ENCODE measurements at regions of chr17 and their contacts with region 1.

Region 1: DNA sequence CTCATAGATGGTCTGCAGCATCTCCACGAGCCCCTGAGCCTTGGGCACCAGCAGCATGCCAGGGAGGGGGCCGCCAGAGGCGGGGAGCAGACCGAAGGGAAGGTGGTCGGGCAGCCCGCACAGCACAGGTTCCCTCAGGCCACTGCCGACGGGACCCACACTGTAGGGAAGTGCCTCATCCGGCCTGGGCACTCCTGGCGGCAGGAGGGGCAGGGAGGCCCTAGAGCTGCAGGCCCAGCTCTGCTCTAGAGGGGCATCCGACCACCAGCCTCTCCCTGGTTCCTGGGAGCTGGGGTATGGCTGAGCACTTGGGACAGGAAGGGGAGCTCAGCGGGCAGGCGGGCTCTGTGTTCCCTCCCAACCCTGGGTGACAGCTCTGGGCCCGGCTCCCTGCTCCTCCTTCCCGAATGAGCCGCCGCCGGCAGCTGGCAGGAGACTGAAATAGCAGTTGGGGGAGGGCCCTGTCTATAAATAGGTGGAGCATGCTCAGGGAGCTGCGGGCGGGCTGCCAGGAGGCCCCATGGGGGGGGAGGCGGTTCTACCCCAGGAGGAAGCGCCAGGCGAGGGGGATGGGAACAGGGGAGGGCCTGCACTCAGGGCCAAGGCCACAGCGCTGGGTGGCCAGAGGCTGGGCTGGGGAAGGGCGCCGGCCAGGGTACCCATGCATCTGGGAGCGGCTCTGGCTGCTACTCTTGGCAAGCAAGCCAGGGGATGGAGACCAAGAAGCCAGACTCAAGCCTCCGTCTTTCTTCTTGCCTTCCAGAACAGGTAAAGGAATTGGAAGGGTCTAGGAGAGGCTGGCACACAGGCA is 12.4 kb downstream of the HDAC5 start:
- DNase-seq: peak; percentile 98 to 99
- ATAC-seq: peak; percentile 43 to 62
- H3K4me3 ChIP-seq: peak overlapping the region; percentile 29 to 76 (median 67)
- H3K27ac ChIP-seq: peak overlapping the region; percentile 92 to 94 (median 94)
- H3K4me1 ChIP-seq: peaks cover 94 to 97% of the 10 kb centered on the region in 2 donors
- H3K27me3 ChIP-seq: no peaks in the 10 kb centered on the region
- CTCF ChIP-seq: peak in 2 of 5 experiments; percentile 23 to 36
- POLR2A ChIP-seq: peak; percentile 98 to 99

Region 2: GRCh38 chr17:44006598-44007345 is 104.3 kb before region 1 on chr17:
- in situ Hi-C with region 1: no loop called
- intact Hi-C with region 1: loop called (anchors 5 kb)
- DNase-seq: peak; percentile 92 to 95
- ATAC-seq: peak; percentile 83 to 91
- H3K4me3 ChIP-seq: peak overlapping the region; percentile 52 to 71 (median 67)
- H3K27ac ChIP-seq: peak overlapping the region in 2 of 4 donors; percentile 32 to 66
- H3K4me1 ChIP-seq: peaks cover 15 to 28% of the 10 kb centered on the region in 2 donors
- H3K27me3 ChIP-seq: peaks cover 35 to 40% (median 40%) of the 10 kb centered on the region in 3 donors
- CTCF ChIP-seq: peak; percentile 18 to 73 (median 59)
- POLR2A ChIP-seq: peak; percentile 21 to 39

Region 3: GRCh38 chr17:44095642-44096496 is 15.2 kb before region 1 on chr17:
- in situ Hi-C with region 1: no loop called
- intact Hi-C with region 1: loop called (anchors 2 kb)
- DNase-seq: peak; percentile 53 to 64
- ATAC-seq: peak; percentile 36 to 63
- H3K4me3 ChIP-seq: peak overlapping the region; percentile 3 to 44 (median 36)
- H3K27ac ChIP-seq: peak overlapping the region; percentile 83 to 94 (median 92)
- H3K4me1 ChIP-seq: peaks cover 60 to 67% of the 10 kb centered on the region in 2 donors
- H3K27me3 ChIP-seq: no peaks in the 10 kb centered on the region
- CTCF ChIP-seq: peak in 2 of 5 experiments; percentile 20 to 29
- POLR2A ChIP-seq: peak; percentile 18 to 20

Region 4: DNA sequence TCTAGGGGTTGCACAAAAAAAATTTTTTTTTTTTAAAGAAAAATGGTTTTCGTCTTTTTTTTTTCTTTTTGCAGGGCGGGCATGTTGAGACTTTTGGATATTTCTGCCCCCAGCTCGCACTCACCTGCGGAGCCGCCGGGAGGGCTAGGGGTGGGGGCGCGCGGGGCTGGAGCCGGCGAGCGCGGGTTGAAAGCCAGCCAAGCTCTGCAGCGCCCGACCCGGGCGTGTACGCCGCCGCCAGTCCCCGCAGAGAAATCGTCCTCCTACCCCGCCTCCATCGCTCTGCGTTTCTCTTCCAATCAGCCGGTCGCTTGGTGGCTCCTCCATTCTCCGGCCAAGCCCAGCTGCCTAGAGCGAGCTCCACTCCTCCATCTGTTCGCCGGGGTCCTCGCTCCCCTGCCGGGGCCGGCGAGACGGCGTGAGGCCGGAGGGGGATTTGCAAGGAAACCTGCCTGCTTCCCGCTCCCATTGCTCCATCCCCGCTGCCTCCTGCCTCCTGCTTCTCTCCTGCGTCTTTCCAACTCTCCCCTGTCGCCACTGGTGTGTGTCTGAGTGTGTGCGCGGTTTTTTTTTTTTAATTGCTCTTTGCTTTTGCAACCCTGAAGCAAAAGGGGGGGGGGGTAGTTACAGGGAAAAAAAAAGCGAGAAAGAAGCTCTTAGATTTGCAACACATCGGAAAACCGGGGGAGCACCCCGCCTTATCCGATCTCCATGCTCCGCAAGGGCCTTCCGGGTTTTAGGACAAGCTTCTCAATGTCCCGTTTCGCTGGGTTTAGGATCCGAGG is 110.2 kb after region 1 on chr17:
- in situ Hi-C with region 1: no loop called
- intact Hi-C with region 1: no loop called
- DNase-seq: peak; percentile 66 to 74
- ATAC-seq: peak; percentile 26 to 38
- H3K4me3 ChIP-seq: peak overlapping the region; percentile 74 to 93 (median 86)
- H3K27ac ChIP-seq: peak overlapping the region; percentile 95 to 100 (median 98)
- H3K4me1 ChIP-seq: peaks cover 34 to 39% of the 10 kb centered on the region in 2 donors
- H3K27me3 ChIP-seq: no peaks in the 10 kb centered on the region
- CTCF ChIP-seq: no peak
- POLR2A ChIP-seq: no peak

Measured in gastrocnemius medialis (tissue), 4 donors.